GM18951 (cell line): ENCODE measurements at regions of chr12 and their contacts with region 1.

Region 1: DNA sequence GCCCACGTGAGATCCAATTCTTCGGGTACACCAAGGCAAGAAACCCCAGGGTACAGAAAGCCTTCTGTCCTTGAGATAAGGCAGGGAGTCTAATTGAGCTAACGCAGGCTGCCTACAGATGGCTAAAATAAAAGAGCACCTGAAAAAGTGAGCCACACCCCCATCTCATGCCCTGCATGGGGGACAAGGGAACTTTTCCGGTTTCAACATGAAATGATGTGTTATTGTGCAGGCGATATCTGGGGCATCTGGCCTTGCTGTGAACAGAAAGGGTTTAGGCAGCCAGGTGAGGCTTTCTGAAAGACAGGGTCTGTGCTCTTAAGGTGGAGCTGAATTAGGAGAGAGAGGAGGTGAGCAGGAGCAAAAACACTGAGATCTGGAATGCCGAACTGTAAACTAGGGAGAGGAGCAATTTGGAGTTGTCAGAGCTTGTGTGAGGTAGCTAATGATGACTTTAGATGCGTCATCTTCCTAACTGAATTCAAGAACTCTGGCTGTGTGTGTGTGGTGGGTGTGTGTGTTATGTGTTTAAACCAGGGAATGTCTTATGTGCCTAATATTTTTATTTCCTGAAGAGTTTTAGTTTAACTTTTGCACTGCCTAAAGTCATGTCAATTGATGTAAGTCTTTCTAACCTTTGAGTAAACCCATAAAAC is 20.1 kb upstream of the LDHB start:
- POLR2A ChIP-seq: no peak

Region 2: GRCh38 chr12:21289698-21290097 is 388.1 kb before region 1 on chr12:
- in situ Hi-C with region 1: no loop called
- POLR2A ChIP-seq: no peak

Region 3: GRCh38 chr12:21607701-21608100 is 70.0 kb before region 1 on chr12:
- in situ Hi-C with region 1: loop called (anchors 10 kb)
- POLR2A ChIP-seq: no peak